ENCODE measurements at regions of chr16 and their contacts with region 1.

Region 1: DNA sequence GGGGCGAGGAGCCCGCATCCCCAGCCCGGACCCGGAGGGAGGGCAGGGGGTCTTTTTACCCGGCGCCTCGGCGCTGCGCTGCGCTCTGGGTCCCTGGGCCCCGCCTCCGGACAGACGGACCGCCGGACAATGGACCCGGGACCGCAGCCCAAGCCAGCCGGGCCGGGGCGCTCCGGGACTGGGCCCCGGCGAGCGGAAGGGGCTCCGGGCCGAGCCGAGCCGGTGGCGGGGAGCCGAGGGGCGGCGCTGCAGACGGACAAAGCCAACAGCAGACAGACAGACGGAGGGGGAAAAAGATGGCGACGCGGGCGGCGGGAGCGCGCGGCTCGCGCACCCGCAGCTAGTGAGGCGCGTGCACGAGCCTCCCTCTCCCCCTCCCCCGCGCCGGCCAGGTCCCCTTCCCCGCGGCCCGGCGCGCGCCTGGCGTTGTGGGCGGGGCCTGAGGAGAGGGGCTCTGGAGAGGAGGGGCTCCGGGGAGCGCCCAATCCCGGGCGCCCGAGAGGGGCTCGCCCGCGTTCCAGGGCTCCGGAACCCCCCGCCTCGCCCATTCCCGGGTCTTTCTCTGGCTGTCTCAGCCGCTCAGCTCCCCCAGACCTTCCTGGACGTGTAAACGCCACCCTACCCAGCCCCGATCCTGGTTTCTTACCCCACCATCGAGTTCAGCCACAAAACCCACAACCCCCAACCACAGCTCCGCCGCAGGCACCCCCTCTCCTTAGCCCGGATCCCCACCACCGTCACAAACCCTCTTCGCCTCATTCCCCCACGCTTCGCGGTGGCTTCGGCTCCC is at the start of gene ZNF821:
- DNase-seq: no peak
- ATAC-seq: peak; percentile 64
- H3K4me3 ChIP-seq: peak within 1 kb of the TSS; percentile 92
- H3K27ac ChIP-seq: peak within 1 kb of the TSS; percentile 71
- H3K4me1 ChIP-seq: peaks cover 12% of the 10 kb centered on the region
- H3K27me3 ChIP-seq: no peaks in the 10 kb centered on the region
- CTCF ChIP-seq: peak in 2 of 3 experiments; percentile 30 to 49; a peak in 2 of 6 replicates
- EP300 ChIP-seq: no peak
- POLR2A ChIP-seq: 0 out of 2 replicates have a peak, but pooled peaks have one; percentile 30
- RAD21 ChIP-seq: no peak
- polyA plus RNA-seq, gene ZNF821: 0.82 to 2.0 TPM

Region 2: DNA sequence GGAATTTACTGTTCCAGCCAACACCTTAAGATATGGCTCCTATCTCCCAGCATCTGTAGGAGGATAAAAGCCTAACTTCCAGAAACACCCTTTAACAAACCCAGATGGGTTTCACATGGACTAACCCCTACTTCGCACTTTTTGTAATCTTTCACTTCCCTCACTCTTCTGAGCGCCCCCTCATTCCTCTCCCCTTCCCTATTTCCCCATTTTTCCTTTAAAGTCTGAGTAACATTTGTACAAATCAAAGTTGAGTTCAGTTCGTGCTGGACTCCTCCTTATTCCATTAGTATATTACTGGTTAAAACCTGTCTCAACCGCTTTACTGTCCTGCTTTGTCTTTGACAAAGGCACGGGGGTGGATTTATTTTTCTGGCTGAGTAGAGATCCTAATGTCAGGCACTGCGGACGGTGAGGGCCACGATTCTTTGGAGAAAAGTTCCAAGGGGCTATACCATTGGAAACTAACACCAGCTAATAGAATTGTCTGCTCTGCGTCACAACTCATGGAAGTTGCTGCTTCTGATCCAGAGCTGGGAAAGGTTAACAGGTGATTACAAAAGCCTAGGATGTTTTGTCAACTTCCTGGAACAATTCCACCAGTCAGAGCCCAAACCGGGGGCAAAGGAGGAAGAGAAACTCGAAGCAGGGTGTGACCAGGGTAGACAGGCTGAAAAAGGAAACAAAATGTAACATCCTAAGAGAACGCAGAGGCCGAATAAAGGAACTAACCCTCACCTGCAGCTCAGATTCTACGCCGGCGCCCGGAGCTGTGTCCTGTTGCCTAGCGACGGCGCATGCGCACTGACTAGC is 319.7 kb before region 1 on chr16:
- CTCF ChIA-PET with region 1: interaction called, 9 read pairs
- POLR2A ChIA-PET with region 1: no interaction called
- RAD21 ChIA-PET with region 1: interaction called, 17 read pairs
- SMC1A ChIA-PET with region 1: interaction called, 4 read pairs
- in situ Hi-C with region 1: no loop called
- intact Hi-C with region 1: loop called (anchors 10 kb)
- DNase-seq: no peak
- ATAC-seq: peak; percentile 1; the same call in 2 of the 3 replicates
- H3K4me3 ChIP-seq: peak overlapping the region; percentile 76
- H3K27ac ChIP-seq: peak overlapping the region; percentile 91
- H3K4me1 ChIP-seq: peaks cover 3% of the 10 kb centered on the region; the same call in 1 of the 2 replicates
- H3K27me3 ChIP-seq: no peaks in the 10 kb centered on the region
- CTCF ChIP-seq: no peak
- EP300 ChIP-seq: no peak
- POLR2A ChIP-seq: no peak
- RAD21 ChIP-seq: no peak

Region 3: DNA sequence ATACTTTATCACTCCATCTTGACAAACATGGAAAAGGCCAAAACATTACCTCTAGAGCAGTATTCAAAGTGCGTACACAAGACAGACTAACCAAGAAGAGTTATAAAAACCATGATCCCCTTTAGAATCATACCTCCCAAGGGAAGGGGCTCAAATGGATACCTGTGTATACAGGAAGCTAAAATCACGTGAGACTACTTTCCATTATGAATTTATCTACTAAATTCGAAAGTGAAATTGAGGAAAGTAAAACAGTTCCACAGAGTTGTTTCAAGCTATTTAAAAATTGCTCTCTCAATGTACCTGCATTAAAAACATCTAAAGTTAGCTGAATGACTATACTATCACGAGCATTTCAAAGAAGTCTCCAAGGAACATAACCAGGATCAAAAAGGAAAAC is 108.1 kb before region 1 on chr16:
- CTCF ChIA-PET with region 1: interaction called, 10 read pairs
- POLR2A ChIA-PET with region 1: interaction called, 5 read pairs
- RAD21 ChIA-PET with region 1: interaction called, 12 read pairs
- SMC1A ChIA-PET with region 1: interaction called, 9 read pairs
- in situ Hi-C with region 1: no loop called
- intact Hi-C with region 1: no loop called
- DNase-seq: peak; percentile 15
- ATAC-seq: peak; percentile 80
- H3K4me3 ChIP-seq: no peak overlapping the region
- H3K27ac ChIP-seq: peak overlapping the region; percentile 44; the same call in 1 of the 2 replicates
- H3K4me1 ChIP-seq: peaks cover 9% of the 10 kb centered on the region
- H3K27me3 ChIP-seq: no peaks in the 10 kb centered on the region
- CTCF ChIP-seq: no peak
- EP300 ChIP-seq: no peak
- POLR2A ChIP-seq: no peak
- RAD21 ChIP-seq: no peak

Region 4: GRCh38 chr16:71808593-71809459 is 75.2 kb before region 1 on chr16 and contains the start of gene AP1G1:
- CTCF ChIA-PET with region 1: interaction called, 33 read pairs
- POLR2A ChIA-PET with region 1: interaction called, 30 read pairs
- RAD21 ChIA-PET with region 1: interaction called, 22 read pairs
- SMC1A ChIA-PET with region 1: interaction called, 26 read pairs
- in situ Hi-C with region 1: no loop called
- intact Hi-C with region 1: loop called (anchors 2 kb)
- DNase-seq: peak; percentile 96
- ATAC-seq: peak; percentile 90
- H3K4me3 ChIP-seq: peak within 1 kb of the TSS; percentile 93
- H3K27ac ChIP-seq: peak within 1 kb of the TSS; percentile 100
- H3K4me1 ChIP-seq: peaks cover 8% of the 10 kb centered on the region
- H3K27me3 ChIP-seq: no peaks in the 10 kb centered on the region
- CTCF ChIP-seq: no peak
- EP300 ChIP-seq: peak in 1 of 2 experiments; percentile 19; a peak in 1 of 4 replicates
- POLR2A ChIP-seq: peak; percentile 92
- RAD21 ChIP-seq: peak; percentile 13; the same call in 1 of the 2 replicates
- polyA plus RNA-seq, gene AP1G1: 5.9 to 8.4 TPM

Region 5: DNA sequence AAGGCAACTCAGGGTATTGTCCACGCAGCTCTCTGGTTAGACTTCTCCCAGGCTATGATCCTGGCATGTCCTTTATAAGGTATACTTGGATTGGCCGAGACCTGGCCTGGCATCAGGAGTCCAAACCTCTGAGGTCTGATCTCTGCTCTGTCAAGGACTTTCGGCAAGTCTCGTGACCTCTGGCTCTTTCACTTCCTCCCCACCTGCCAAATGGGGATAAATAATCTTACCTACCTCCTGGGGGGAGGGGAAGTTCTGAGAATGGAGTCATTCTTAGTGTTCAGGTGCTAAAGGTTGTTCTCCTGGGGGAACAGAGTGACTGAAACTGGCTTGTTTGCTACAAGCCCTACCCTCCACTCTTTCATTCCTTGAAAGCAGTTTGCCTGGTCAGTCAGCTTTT is 30.6 kb before region 1 on chr16:
- CTCF ChIA-PET with region 1: interaction called, 9 read pairs
- POLR2A ChIA-PET with region 1: interaction called, 4 read pairs
- RAD21 ChIA-PET with region 1: interaction called, 11 read pairs
- SMC1A ChIA-PET with region 1: interaction called, 11 read pairs
- in situ Hi-C with region 1: no loop called
- intact Hi-C with region 1: no loop called
- DNase-seq: no peak
- ATAC-seq: peak; percentile 88
- H3K4me3 ChIP-seq: peak overlapping the region; percentile 17
- H3K27ac ChIP-seq: peak overlapping the region; percentile 86
- H3K4me1 ChIP-seq: peaks cover 32% of the 10 kb centered on the region
- H3K27me3 ChIP-seq: no peaks in the 10 kb centered on the region
- CTCF ChIP-seq: no peak
- EP300 ChIP-seq: peak; percentile 27 to 66; a peak in 2 of 4 replicates
- POLR2A ChIP-seq: no peak
- RAD21 ChIP-seq: 0 out of 2 replicates have a peak, but pooled peaks have one; percentile 4

Region 6: GRCh38 chr16:71903608-71904007 is 19.6 kb after region 1 on chr16:
- CTCF ChIA-PET with region 1: interaction called, 31 read pairs
- POLR2A ChIA-PET with region 1: interaction called, 8 read pairs
- RAD21 ChIA-PET with region 1: interaction called, 15 read pairs
- SMC1A ChIA-PET with region 1: interaction called, 9 read pairs
- in situ Hi-C with region 1: no loop called
- intact Hi-C with region 1: no loop called
- DNase-seq: no peak
- ATAC-seq: no peak
- H3K4me3 ChIP-seq: no peak overlapping the region
- H3K27ac ChIP-seq: no peak overlapping the region
- H3K4me1 ChIP-seq: peaks cover 4% of the 10 kb centered on the region; the same call in 1 of the 2 replicates
- H3K27me3 ChIP-seq: no peaks in the 10 kb centered on the region
- CTCF ChIP-seq: no peak
- EP300 ChIP-seq: no peak
- POLR2A ChIP-seq: no peak
- RAD21 ChIP-seq: no peak

Region 7: DNA sequence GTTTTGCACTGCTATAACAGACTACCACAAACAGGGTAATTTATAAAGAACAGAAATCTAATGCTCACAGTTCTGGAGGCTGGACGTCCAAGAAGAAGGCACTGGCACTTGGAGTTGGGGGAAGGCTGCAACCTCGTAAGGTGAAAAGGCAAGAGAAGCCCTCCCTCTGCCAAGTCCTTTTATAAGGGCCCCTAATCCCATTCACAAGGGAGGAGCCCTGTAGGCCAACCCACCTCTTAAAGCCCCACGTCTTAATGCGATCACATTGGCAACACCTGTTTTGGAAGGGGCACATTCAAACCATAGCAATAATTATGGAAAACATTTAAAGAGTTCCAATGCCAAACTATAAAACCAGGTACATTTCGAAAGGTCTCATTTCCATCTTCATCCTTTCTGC is 111.0 kb after region 1 on chr16:
- CTCF ChIA-PET with region 1: no interaction called
- POLR2A ChIA-PET with region 1: no interaction called
- RAD21 ChIA-PET with region 1: no interaction called
- SMC1A ChIA-PET with region 1: no interaction called
- in situ Hi-C with region 1: no loop called
- intact Hi-C with region 1: no loop called
- DNase-seq: no peak
- ATAC-seq: no peak
- H3K4me3 ChIP-seq: no peak overlapping the region
- H3K27ac ChIP-seq: no peak overlapping the region
- H3K4me1 ChIP-seq: no peaks in the 10 kb centered on the region
- H3K27me3 ChIP-seq: no peaks in the 10 kb centered on the region
- CTCF ChIP-seq: no peak
- EP300 ChIP-seq: no peak
- POLR2A ChIP-seq: no peak
- RAD21 ChIP-seq: no peak

Measured in GM12878 (cell line).